AG04450 (cell line): ENCODE measurements at regions of chrX and their contacts with region 1.

Region 1: GRCh38 chrX:68196939-68197791 is 236.1 kb downstream of the OPHN1 start:
- DNase-seq: no peak
- H3K4me3 ChIP-seq: no peak overlapping the region
- H3K27ac ChIP-seq: no peak overlapping the region
- H3K27me3 ChIP-seq: no peaks in the 10 kb centered on the region
- CTCF ChIP-seq: peak; percentile 67

Region 2: DNA sequence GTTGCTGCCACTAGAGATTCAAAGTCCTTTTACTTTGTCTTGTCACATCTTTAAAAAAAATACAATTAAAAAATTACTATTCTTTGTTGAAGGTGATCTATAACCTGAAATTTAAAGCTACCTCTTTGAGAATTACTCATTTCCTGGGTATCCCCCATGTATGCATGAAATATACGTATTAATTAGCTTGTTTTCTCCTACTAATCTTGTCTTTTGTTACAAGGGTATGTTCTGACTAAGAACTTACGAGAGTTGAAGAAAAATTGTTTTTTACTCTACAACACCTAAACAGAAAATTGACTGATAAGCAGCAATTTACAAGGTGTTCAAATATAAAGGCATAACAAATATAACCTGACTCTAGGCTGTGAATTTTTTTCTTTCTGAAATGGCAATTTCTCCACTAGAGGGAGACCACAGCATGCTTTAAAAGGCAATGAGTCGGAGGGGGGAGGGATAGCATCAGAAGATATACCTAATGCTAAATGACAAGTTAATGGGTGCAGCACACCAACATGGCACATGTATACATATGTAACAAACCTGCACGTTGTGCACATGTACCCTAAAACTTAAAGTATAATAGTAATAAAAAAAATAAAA is 13.5 kb before region 1 on chrX:
- CTCF ChIA-PET with region 1: interaction called, 27 read pairs
- POLR2A ChIA-PET with region 1: no interaction called
- DNase-seq: no peak
- H3K4me3 ChIP-seq: no peak overlapping the region
- H3K27ac ChIP-seq: no peak overlapping the region
- H3K27me3 ChIP-seq: no peaks in the 10 kb centered on the region
- CTCF ChIP-seq: peak; percentile 63

Region 3: DNA sequence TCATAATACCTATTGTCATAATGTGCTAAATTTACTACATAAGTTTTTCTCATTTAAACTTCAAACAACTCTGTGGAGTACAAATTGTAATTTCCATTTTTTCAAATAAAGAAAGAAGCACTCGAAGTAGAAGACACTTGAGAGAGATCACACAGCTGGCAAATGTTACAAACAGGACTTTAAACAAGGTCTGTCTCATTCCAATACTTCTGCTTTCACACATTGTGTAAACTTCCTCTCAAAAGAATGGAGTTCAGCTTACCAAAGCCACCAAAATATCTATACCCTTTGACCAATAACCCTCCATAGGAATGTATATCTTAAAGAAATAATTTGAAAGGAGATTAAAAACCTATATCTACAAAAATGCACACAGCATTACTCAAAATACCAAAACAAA is 147.9 kb after region 1 on chrX:
- CTCF ChIA-PET with region 1: no interaction called
- POLR2A ChIA-PET with region 1: no interaction called
- DNase-seq: peak; percentile 10
- H3K4me3 ChIP-seq: no peak overlapping the region
- H3K27ac ChIP-seq: no peak overlapping the region
- H3K27me3 ChIP-seq: no peaks in the 10 kb centered on the region
- CTCF ChIP-seq: no peak

Region 4: DNA sequence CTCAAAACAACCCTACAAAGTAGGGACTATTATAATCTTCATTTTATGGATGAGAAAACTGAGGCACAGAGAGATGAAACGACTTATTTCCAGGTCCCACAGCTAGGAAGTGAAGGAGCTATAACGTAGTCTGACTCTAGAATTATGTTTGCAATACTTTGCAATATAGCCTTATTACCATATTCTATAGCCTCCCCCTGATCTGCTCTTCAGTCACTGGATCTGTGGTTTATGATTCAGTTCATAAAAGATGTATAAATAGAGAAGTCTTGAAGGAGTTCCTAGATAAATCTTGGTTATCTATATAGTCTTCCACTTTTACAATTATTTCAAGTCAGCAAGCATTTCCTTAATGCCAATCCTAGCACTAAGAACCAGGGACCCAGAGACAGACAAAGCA is 178.6 kb after region 1 on chrX:
- CTCF ChIA-PET with region 1: no interaction called
- POLR2A ChIA-PET with region 1: no interaction called
- DNase-seq: no peak
- H3K4me3 ChIP-seq: no peak overlapping the region
- H3K27ac ChIP-seq: no peak overlapping the region
- H3K27me3 ChIP-seq: no peaks in the 10 kb centered on the region
- CTCF ChIP-seq: no peak

Region 5: GRCh38 chrX:68462653-68463052 is 265.5 kb after region 1 on chrX:
- CTCF ChIA-PET with region 1: interaction called, 12 read pairs
- POLR2A ChIA-PET with region 1: no interaction called
- DNase-seq: no peak
- H3K4me3 ChIP-seq: no peak overlapping the region
- H3K27ac ChIP-seq: no peak overlapping the region
- H3K27me3 ChIP-seq: no peaks in the 10 kb centered on the region
- CTCF ChIP-seq: peak; percentile 48

Region 6: DNA sequence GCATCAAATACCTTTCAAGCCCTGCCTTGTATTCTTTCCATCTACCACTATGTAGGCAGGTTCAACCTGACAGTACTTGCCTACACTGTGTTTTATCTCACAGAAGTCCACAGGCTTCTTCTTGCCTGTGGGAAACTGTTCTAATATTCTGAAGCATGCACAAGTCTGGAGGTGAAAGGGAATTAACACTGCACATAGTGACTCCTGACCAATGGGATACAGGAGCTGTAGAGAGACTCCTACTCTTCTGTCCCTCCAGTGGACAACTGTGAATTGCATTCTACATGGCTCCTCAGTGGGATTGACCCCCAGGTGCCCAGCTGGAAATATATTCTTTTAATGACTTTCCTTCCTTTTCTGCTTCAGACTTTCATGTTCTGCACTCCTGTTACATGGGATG is 293.4 kb after region 1 on chrX:
- CTCF ChIA-PET with region 1: interaction called, 13 read pairs
- POLR2A ChIA-PET with region 1: no interaction called
- DNase-seq: no peak
- H3K4me3 ChIP-seq: no peak overlapping the region
- H3K27ac ChIP-seq: no peak overlapping the region
- H3K27me3 ChIP-seq: no peaks in the 10 kb centered on the region
- CTCF ChIP-seq: peak; percentile 39

Region 7: GRCh38 chrX:68498508-68499379 is 301.6 kb after region 1 on chrX and contains the start of gene YIPF6:
- CTCF ChIA-PET with region 1: interaction called, 19 read pairs
- POLR2A ChIA-PET with region 1: no interaction called
- DNase-seq: no peak
- H3K4me3 ChIP-seq: peak within 1 kb of the TSS; percentile 79
- H3K27ac ChIP-seq: peak within 1 kb of the TSS; percentile 87
- H3K27me3 ChIP-seq: no peaks in the 10 kb centered on the region
- CTCF ChIP-seq: no peak
- polyA plus RNA-seq, gene YIPF6: 28.6 and 38.5 TPM in 2 replicates

Region 8: DNA sequence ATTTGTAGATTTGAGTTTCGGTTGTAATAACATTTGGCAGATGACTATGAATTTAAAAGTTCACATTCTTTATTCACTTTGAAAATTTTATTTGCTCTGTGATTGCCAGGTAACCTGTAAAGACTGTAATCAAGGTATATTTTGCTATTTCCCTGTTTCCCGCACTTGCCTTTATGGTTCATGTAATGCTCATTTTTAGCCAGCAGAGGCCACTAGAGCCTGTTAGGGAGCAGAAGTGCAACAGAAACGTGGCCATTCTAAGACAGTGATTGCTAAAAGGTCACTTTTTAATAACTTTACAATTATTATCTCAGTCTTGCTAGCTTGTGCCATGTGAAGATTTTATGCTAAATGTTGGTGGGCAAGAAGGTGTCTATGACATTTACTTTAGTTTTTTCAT is 314.1 kb after region 1 on chrX:
- CTCF ChIA-PET with region 1: interaction called, 11 read pairs
- POLR2A ChIA-PET with region 1: no interaction called
- DNase-seq: no peak
- H3K4me3 ChIP-seq: no peak overlapping the region
- H3K27ac ChIP-seq: no peak overlapping the region
- H3K27me3 ChIP-seq: no peaks in the 10 kb centered on the region
- CTCF ChIP-seq: peak; percentile 80